SK-N-SH (cell line): ENCODE measurements at regions of chr12 and their contacts with region 1.

Region 1: GRCh38 chr12:51871126-51871525 is 16.8 kb upstream of the ANKRD33 start:
- DNase-seq: no peak
- H3K4me3 ChIP-seq: no peak overlapping the region
- H3K27ac ChIP-seq: no peak overlapping the region
- H3K4me1 ChIP-seq: peaks cover 0 to 47% of the 10 kb centered on the region in 2 experiments; a peak in 1 of 4 replicates
- H3K27me3 ChIP-seq: no peaks in the 10 kb centered on the region; the same call in 1 of the 2 replicates
- CTCF ChIP-seq: no peak
- EP300 ChIP-seq: no peak
- RAD21 ChIP-seq: no peak

Region 2: DNA sequence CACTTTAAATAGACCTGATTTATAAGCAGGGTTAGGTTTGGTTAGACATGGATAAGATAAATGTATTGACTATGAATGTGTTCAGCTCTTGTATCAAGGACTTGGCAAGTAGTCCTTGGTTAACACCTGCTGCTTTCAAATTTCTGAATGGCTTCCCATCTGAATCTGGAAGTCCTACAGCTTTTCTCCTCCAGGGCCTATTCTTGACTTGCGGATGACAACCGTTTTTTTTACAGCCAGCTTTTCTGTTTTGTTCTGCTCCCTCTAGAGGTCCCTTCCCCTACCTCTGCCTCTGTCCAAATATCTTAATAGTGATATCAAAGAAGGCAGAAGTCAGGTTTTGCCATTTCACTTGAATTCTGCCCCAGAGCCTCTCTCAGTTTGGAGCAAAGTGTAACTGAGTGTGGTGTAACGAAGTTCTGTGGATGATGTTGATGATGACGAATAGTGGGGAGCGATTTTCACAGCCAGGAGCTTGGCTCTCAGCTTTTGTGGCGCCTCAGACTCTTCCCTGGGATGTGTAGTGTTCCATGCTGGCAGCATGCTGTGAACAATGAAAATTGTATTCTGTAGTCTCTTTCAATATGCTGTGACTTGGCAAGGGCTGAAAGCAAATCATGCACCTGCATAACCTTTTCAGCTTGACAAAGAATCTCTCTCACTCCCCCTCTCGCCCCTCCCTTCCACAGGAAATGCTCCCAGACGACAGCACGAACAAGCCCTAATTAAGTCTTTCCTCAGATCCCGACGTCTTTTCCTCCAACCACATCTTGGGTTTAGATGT is 451.5 kb before region 1 on chr12:
- CTCF ChIA-PET with region 1: interaction called, 20 read pairs
- POLR2A ChIA-PET with region 1: no interaction called
- DNase-seq: no peak
- H3K4me3 ChIP-seq: no peak overlapping the region
- H3K27ac ChIP-seq: peak overlapping the region in 1 of 2 experiments; percentile 53; a peak in 2 of 4 replicates
- H3K4me1 ChIP-seq: peaks cover 4 to 18% of the 10 kb centered on the region in 2 experiments; a peak in 2 of 4 replicates
- H3K27me3 ChIP-seq: no peaks in the 10 kb centered on the region
- CTCF ChIP-seq: no peak
- EP300 ChIP-seq: no peak
- RAD21 ChIP-seq: no peak

Region 3: DNA sequence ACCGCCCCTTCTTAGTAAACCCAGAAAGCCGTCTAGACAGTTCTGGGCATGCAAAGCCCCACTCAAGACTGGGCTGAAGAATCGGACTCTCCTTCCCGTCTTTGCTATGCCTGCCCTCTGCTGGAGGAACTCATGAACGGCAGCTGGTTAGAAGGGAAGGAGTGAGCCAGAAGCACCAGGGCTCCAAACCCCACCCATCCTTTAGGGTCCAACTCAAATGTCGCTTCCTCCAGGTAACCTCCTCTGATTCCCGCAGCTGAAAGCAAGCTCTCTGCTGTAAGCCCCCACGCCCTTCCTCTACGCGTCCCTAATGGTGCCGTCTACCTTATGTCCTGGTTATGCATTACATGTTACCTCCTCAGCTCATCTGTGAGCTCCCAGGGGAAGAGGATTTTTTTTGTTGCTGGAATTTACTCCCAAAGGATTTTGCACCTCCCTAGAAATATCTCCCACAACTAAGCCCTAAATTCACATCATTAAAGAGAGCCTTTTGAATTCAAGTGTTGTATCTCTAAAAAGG is 339.1 kb before region 1 on chr12:
- CTCF ChIA-PET with region 1: interaction called, 25 read pairs
- POLR2A ChIA-PET with region 1: no interaction called
- DNase-seq: peak; percentile 80
- H3K4me3 ChIP-seq: no peak overlapping the region
- H3K27ac ChIP-seq: no peak overlapping the region
- H3K4me1 ChIP-seq: peaks cover 6 to 27% of the 10 kb centered on the region in 2 experiments; a peak in 2 of 4 replicates
- H3K27me3 ChIP-seq: no peaks in the 10 kb centered on the region
- CTCF ChIP-seq: peak; percentile 83
- EP300 ChIP-seq: no peak
- RAD21 ChIP-seq: peak; percentile 95

Region 4: GRCh38 chr12:51832354-51833107 is 38.6 kb before region 1 on chr12:
- CTCF ChIA-PET with region 1: interaction called, 21 read pairs
- POLR2A ChIA-PET with region 1: interaction called, 3 read pairs
- DNase-seq: no peak
- H3K4me3 ChIP-seq: no peak overlapping the region
- H3K27ac ChIP-seq: no peak overlapping the region
- H3K4me1 ChIP-seq: peaks cover 0 to 24% of the 10 kb centered on the region in 2 experiments; a peak in 1 of 4 replicates
- H3K27me3 ChIP-seq: no peaks in the 10 kb centered on the region
- CTCF ChIP-seq: no peak
- EP300 ChIP-seq: no peak
- RAD21 ChIP-seq: no peak

Region 5: GRCh38 chr12:51846911-51847642 is 24.0 kb before region 1 on chr12:
- CTCF ChIA-PET with region 1: interaction called, 25 read pairs
- POLR2A ChIA-PET with region 1: no interaction called
- DNase-seq: peak; percentile 94
- H3K4me3 ChIP-seq: peak overlapping the region; percentile 61 to 63
- H3K27ac ChIP-seq: peak overlapping the region in 1 of 2 experiments; percentile 90; a peak in 2 of 4 replicates
- H3K4me1 ChIP-seq: peaks cover 0 to 42% of the 10 kb centered on the region in 2 experiments; a peak in 2 of 4 replicates
- H3K27me3 ChIP-seq: peaks cover 12% of the 10 kb centered on the region; the same call in 1 of the 2 replicates
- CTCF ChIP-seq: no peak
- EP300 ChIP-seq: no peak
- RAD21 ChIP-seq: no peak

Region 6: DNA sequence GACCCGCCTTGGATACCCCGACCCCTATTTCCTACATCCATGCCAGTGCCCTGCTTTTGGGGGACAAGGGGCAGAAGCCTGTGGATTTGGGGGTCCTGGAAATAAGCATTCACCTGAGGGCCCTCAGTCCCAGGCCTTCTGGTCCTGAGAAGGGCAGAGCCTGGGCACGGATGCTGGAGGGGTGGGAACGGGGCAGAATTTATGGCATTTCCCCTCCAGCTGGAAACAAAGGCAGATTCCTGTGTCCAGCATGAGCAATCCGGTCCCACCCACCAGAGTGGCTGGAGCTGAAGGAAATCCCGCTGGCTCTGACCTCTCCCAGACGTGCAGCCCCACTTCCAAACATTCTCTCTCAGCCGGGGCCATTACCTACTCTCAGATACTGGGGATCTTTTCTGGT is 26.1 kb after region 1 on chr12:
- CTCF ChIA-PET with region 1: interaction called, 18 read pairs
- POLR2A ChIA-PET with region 1: no interaction called
- DNase-seq: peak; percentile 12
- H3K4me3 ChIP-seq: no peak overlapping the region
- H3K27ac ChIP-seq: no peak overlapping the region
- H3K4me1 ChIP-seq: peaks cover 0 to 9% of the 10 kb centered on the region in 2 experiments; a peak in 1 of 4 replicates
- H3K27me3 ChIP-seq: no peaks in the 10 kb centered on the region
- CTCF ChIP-seq: no peak
- EP300 ChIP-seq: no peak
- RAD21 ChIP-seq: no peak

Region 7: DNA sequence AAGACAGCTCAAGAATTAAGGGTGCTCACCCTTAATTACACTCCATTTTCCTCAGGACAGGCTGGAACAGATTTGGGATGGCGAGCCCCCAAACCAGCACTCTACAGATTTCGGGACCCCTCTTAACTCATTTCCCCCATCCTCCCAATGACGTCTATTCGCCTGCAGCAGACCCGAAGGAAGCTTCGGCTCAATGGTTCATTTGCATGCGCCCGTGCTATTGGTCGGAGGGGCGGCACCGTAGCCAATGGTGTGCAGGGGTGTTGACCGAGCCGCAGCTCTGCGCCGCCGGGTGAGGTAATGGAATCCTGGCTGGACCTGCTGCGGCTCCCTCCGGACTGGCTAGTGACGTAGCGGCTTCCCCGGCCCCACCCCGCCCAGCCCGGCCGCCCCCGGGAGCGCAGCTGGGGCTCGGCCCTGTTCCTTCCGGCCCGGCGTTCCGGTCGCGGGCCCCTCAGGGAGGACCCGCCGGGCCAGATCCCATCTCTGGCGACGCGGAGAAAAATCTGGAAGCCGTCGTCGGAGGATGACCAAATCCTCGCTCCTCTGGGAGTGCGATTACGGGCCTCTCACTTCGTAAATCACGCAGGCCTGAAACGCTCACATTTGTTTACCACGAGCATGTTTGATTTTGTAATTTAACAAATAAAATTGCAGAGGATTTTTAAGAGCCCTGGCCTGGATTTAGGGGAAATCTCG is 161.8 kb after region 1 on chr12:
- CTCF ChIA-PET with region 1: no interaction called
- POLR2A ChIA-PET with region 1: no interaction called
- DNase-seq: peak; percentile 96
- H3K4me3 ChIP-seq: peak overlapping the region; percentile 46 to 53
- H3K27ac ChIP-seq: peak overlapping the region; percentile 82 to 94
- H3K4me1 ChIP-seq: peaks cover 0 to 27% of the 10 kb centered on the region in 2 experiments; a peak in 2 of 4 replicates
- H3K27me3 ChIP-seq: no peaks in the 10 kb centered on the region
- CTCF ChIP-seq: no peak
- EP300 ChIP-seq: no peak
- RAD21 ChIP-seq: no peak